Activated CD8-positive, alpha-beta memory T cell treated with anti-CD3 and anti-CD28 coated beads, Interleukin-2, amount 10 ng/mL, durations not matched to agents 7 days and 5 days (primary cell): ENCODE measurements at regions of chr12 and their contacts with region 1.

Region 1: GRCh38 chr12:47397664-47398281 is 308.1 kb downstream of the RPAP3 start:
- DNase-seq: peak; percentile 75
- ATAC-seq: peak; percentile 88
- H3K4me3 Mint-ChIP-seq: no peak overlapping the region
- H3K27ac Mint-ChIP-seq: peak overlapping the region; percentile 87
- H3K4me1 Mint-ChIP-seq: peaks cover 71% of the 10 kb centered on the region
- H3K27me3 Mint-ChIP-seq: no peaks in the 10 kb centered on the region

Region 2: DNA sequence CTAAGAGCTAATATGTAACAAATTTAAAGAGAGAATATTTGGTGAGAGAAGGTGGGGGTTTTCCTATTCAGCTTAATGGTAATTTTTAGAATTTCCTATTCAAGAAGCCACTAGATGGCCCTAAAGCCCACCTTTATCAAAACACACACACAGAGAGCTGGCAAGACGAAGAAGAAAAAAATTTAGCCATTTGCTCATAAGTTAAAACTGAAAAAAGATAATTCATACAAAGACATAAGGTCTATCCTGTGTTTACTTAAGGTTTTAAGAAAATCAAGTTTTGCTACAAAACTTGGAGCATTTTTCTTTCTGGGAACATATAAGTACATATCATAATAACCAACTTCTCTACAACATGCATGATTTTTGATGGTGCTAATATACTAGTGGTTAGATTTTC is 365.1 kb before region 1 on chr12:
- CTCF ChIA-PET with region 1: interaction called, 63 read pairs
- DNase-seq: no peak
- ATAC-seq: peak; percentile 63
- H3K4me3 Mint-ChIP-seq: no peak overlapping the region
- H3K27ac Mint-ChIP-seq: no peak overlapping the region
- H3K4me1 Mint-ChIP-seq: peaks cover 8% of the 10 kb centered on the region
- H3K27me3 Mint-ChIP-seq: no peaks in the 10 kb centered on the region

Region 3: GRCh38 chr12:47085815-47086252 is 311.9 kb before region 1 on chr12:
- CTCF ChIA-PET with region 1: interaction called, 40 read pairs
- DNase-seq: peak; percentile 79
- ATAC-seq: peak; percentile 96
- H3K4me3 Mint-ChIP-seq: peak overlapping the region; percentile 61
- H3K27ac Mint-ChIP-seq: peak overlapping the region; percentile 84
- H3K4me1 Mint-ChIP-seq: peaks cover 54% of the 10 kb centered on the region
- H3K27me3 Mint-ChIP-seq: no peaks in the 10 kb centered on the region

Region 4: DNA sequence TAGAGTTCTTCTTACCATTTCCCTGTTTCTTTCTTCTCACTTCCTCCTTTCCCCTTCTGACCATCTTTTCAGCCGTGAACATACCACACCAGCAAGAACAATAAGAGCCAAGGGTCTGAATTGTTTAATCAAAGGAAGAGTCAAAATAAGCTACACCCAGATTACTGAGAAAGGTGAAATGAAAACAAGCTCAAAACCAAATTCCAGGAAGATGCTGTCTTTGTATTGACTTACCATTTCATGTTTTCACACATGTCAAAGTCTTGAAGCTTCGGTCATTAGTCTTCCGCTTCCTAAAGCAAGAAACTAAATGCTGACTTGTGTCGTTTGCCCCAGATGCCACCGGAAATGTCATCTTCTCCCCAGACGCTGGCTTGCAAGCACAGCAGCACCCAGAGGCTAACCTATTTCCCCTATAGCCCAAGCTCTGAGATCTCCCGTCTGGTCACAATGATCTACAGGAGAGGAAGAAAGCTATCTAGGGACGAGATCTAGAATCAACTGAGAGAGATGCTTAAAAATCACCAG is 181.6 kb before region 1 on chr12:
- CTCF ChIA-PET with region 1: interaction called, 32 read pairs
- DNase-seq: peak; percentile 92
- ATAC-seq: peak; percentile 60
- H3K4me3 Mint-ChIP-seq: peak overlapping the region; percentile 87
- H3K27ac Mint-ChIP-seq: peak overlapping the region; percentile 97
- H3K4me1 Mint-ChIP-seq: peaks cover 52% of the 10 kb centered on the region
- H3K27me3 Mint-ChIP-seq: no peaks in the 10 kb centered on the region

Region 5: DNA sequence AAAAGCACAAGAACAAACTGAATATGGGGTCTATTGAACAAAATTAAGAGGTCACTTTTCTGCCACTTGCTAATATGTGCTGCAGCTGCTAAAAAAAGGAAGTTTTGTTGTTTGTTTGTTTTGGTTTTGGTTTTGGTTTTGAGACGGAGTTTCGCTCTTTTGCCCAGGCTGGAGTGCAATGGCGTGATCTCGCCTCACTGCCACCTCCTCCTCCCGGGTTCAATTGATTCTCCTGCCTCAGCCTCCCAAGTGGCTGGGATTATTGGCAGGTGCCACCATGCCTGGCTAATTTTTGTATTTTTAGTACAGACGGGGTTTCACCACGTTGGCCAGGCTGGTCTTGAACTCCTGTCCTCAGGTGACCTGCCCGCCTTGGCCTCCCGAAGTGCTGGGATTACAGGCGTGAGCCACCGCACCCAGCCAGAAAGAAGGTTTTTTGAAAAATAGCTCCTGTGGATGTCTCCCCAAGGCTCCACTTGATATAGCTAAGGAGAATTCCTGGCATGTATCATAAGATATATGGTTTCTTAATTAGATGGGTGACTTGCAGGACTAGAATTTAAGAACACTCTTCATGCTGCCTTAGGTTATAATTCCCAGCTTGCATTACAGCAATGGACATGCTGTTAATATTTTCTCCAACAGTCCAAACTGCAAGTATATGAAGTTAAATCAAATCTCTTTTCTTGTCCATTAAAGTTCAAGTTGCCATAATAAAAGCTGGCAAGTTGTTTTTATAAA is 80.4 kb before region 1 on chr12:
- CTCF ChIA-PET with region 1: interaction called, 17 read pairs
- DNase-seq: peak; percentile 48
- ATAC-seq: peak; percentile 69
- H3K4me3 Mint-ChIP-seq: peak overlapping the region; percentile 65
- H3K27ac Mint-ChIP-seq: peak overlapping the region; percentile 86
- H3K4me1 Mint-ChIP-seq: peaks cover 39% of the 10 kb centered on the region
- H3K27me3 Mint-ChIP-seq: no peaks in the 10 kb centered on the region

Region 6: GRCh38 chr12:47361389-47362021 is 36.3 kb before region 1 on chr12:
- CTCF ChIA-PET with region 1: interaction called, 55 read pairs
- DNase-seq: peak; percentile 81
- ATAC-seq: peak; percentile 91
- H3K4me3 Mint-ChIP-seq: peak overlapping the region; percentile 69
- H3K27ac Mint-ChIP-seq: peak overlapping the region; percentile 97
- H3K4me1 Mint-ChIP-seq: peaks cover 57% of the 10 kb centered on the region
- H3K27me3 Mint-ChIP-seq: no peaks in the 10 kb centered on the region

Region 7: DNA sequence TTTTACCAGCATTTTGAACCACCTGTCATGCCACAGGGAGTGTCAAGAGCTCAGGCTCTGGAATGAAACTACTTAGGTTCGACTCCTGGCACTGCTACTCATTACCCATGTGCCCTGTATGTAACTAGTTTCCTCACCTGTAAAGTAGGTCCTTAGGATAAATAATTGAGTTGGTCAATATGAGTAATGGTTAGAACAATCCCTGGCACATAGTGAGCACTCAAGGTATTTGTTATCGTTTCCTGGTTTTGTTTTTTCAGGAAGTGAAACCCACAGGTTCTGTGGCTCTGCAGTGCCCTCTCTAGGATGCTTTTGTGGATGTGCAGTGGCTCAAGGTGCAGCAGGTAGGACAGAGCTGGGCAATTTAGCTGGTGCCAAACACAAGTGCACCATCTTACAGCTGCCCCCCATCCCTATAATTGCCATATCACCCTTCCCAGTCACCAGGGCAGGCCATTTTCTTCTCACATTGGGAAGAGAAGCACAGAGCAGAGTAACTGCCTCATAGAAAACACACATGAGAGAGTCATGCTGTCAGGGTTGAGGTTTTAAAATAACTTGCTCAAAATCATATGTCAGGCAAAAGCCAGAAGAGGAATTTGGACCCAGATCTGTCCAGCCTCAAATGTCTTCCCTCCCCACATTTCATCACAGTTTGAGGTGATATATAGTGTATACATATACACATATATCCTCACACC is 10.5 kb after region 1 on chr12:
- CTCF ChIA-PET with region 1: interaction called, 27 read pairs
- DNase-seq: peak; percentile 67
- ATAC-seq: peak; percentile 80
- H3K4me3 Mint-ChIP-seq: no peak overlapping the region
- H3K27ac Mint-ChIP-seq: peak overlapping the region; percentile 37
- H3K4me1 Mint-ChIP-seq: peaks cover 24% of the 10 kb centered on the region
- H3K27me3 Mint-ChIP-seq: no peaks in the 10 kb centered on the region